Posterior cingulate gyrus (tissue), 11 donors: ENCODE measurements at regions of chr11 and their contacts with region 1.

Region 1: GRCh38 chr11:98679673-98680072 is 341.1 kb upstream of the CNTN5 start:
- DNase-seq: no peak

Region 2: GRCh38 chr11:98625526-98625925 is 54.1 kb before region 1 on chr11:
- intact Hi-C with region 1: loop called (anchors 10 kb)
- DNase-seq: no peak